ENCODE measurements at regions of chr5 and their contacts with region 1.

Region 1: DNA sequence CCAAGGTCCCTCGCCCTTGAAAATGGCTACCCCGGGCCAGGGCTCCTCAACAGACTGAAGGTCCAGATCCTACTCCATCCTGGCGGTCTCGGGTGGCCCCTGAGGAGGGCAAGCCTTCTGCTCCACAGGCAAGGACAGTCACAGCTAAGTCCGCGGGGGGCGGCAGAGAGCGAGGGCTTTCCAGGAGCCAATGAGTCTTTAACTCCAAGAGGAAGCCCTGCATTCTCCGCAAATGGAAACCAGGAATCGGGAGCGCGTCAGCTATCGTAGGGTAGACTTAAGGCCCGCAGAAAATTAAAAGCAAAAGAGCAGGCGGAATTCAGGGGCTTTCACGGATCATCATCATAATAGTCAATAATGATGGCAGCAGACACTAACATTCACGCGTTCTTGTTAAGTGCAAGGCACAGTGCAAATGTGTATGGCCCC is 87.8 kb upstream of the TNFAIP8 start:
- DNase-seq: peak; percentile 93
- H3K4me3 Mint-ChIP-seq: peak overlapping the region; percentile 83
- H3K27ac Mint-ChIP-seq: peak overlapping the region; percentile 65
- H3K4me1 Mint-ChIP-seq: peaks cover 39% of the 10 kb centered on the region
- H3K27me3 Mint-ChIP-seq: no peaks in the 10 kb centered on the region
- CTCF ChIP-seq: peak; percentile 56

Region 2: GRCh38 chr5:119131530-119132313 is 136.2 kb before region 1 on chr5:
- CTCF ChIA-PET with region 1: no interaction called
- intact Hi-C with region 1: loop called (anchors 5 kb)
- DNase-seq: no peak
- H3K4me3 Mint-ChIP-seq: no peak overlapping the region
- H3K27ac Mint-ChIP-seq: peak overlapping the region; percentile 79
- H3K4me1 Mint-ChIP-seq: peaks cover 32% of the 10 kb centered on the region
- H3K27me3 Mint-ChIP-seq: no peaks in the 10 kb centered on the region
- CTCF ChIP-seq: no peak

Region 3: DNA sequence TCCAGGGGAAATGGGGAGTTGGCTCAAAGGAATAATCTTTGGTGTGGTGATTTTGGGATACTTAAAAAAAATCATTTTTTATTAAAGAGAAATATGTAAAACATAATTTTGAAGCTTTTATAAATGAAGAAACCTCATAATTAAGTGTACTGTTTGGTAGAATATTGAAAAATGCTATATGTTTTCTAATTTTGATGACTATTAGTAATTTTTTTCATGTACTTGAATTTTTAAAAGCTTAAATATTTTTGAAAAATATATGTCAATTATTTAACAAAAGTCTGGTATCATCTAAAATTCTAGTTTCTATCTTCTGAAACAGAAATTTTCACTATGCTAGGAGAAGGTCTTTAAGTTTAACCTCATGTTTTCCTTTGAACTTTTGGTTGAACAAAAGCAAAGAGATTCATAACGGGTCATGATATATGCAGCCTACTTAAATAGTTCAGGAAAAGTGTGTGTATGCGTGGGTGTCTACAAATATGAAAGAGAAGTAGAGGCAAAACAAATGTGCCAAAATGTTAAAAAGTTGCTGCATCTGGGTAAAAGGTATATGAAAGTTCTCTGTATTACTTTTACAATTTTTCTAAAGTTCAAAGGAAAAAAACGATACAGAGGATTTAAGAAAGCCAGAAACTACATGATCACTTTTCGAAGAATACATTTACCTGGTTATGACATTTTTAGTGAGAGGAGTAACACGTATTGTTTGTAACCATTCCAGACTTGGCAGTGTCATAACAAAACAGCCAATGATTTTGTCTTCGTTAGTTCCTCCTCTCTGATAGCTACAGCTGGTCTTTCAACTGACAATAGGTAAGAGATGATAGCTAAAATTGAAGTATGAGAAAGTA is 29.5 kb before region 1 on chr5:
- CTCF ChIA-PET with region 1: no interaction called
- intact Hi-C with region 1: no loop called
- DNase-seq: no peak
- H3K4me3 Mint-ChIP-seq: no peak overlapping the region
- H3K27ac Mint-ChIP-seq: no peak overlapping the region
- H3K4me1 Mint-ChIP-seq: no peaks in the 10 kb centered on the region
- H3K27me3 Mint-ChIP-seq: no peaks in the 10 kb centered on the region
- CTCF ChIP-seq: no peak

Region 4: GRCh38 chr5:119290161-119290569 is 22.2 kb after region 1 on chr5:
- CTCF ChIA-PET with region 1: no interaction called
- intact Hi-C with region 1: loop called (anchors 1 kb)
- DNase-seq: no peak
- H3K4me3 Mint-ChIP-seq: no peak overlapping the region
- H3K27ac Mint-ChIP-seq: no peak overlapping the region
- H3K4me1 Mint-ChIP-seq: peaks cover 70% of the 10 kb centered on the region
- H3K27me3 Mint-ChIP-seq: no peaks in the 10 kb centered on the region
- CTCF ChIP-seq: no peak

Region 5: DNA sequence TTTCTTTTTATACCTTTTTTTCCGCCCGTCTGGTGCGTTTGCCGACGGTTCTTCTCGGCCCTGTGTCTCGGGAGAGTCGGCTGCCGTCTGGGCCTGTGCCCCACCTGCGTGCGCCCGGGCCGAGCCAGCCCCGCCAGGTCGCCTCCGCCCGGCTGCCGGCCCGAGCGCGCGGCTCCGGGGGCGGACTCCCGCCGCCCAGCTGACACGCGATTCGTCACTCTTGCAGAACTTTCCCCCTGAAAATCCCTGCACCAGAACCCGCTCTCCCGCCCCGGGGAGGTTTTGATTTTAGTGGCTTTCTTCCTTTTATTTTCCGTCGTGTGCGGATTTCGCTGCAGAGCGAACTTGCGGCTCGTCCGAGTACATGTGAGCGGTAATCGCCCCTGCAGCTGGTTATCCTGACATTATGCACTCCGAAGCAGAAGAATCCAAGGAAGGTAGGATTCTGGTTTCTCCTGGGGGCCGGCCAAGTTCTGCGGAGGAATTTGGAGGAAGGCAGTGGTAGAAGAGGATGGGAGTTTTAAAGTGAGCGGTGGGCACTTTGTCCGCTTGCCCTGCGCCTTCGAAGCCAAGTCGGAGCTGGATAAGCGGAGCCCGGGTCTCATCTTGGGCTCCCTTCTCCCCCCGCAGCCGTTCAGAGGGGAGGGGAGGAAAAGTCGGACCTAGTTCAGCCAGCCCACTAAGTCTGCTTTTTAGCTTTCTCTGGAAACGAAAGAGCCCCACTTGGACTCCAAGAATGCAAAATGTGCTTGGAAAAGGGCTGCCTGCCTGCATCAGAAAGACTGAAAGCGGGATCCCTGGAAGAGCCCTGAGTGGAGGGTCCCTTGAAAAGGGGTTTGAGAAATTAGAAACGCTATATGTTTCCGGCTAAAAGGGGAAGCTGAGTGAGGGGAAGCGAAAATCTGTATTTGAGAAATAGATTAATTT is 88.0 kb after region 1 on chr5 and contains the start of gene TNFAIP8:
- CTCF ChIA-PET with region 1: no interaction called
- intact Hi-C with region 1: loop called (anchors 2 kb)
- DNase-seq: peak; percentile 69
- H3K4me3 Mint-ChIP-seq: peak within 1 kb of the TSS; percentile 96
- H3K27ac Mint-ChIP-seq: peak within 1 kb of the TSS; percentile 45
- H3K4me1 Mint-ChIP-seq: peaks cover 75% of the 10 kb centered on the region
- H3K27me3 Mint-ChIP-seq: no peaks in the 10 kb centered on the region
- CTCF ChIP-seq: no peak
- total RNA-seq, gene TNFAIP8: 24.2 and 30.6 TPM in 2 replicates

Measured in Calu3 (cell line).